Right ventricle myocardium superior (tissue), 1 donor: ENCODE measurements at regions of chrX and their contacts with region 1.

Region 1: GRCh38 chrX:9341291-9342201 is 123.3 kb upstream of the TBL1X start:
- DNase-seq: peak; percentile 81
- ATAC-seq: peak; percentile 38

Region 2: DNA sequence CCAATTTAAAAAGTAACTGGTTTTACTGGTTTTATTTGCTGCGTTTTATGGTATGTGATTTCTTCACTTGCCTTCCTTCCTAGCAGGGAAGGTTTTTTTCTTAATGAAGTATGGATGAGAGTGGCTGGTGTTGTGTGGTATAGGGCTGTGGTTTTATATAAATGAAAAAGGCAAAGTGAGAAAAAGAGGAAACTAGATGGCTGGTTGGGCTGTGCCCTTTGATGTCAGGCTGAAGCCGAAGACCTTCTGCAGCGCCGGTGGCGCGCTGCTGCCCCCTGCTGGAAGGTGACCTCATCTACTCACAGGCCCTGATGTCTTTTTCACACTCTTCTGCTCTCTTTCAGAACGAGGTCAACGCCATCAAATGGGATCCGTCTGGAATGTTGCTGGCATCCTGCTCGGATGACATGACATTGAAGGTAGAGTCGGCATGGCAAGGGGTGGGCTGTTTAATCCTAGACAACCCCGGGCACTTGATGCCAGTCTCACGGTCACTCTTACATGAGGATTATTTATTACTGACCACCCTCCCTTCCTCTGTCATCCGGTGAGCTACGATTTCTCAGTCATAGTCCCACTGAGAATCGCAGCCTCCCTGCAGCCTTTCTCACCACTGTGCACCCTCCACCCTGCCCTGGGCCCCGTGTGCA is 367.5 kb after region 1 on chrX:
- intact Hi-C with region 1: loop called (anchors 10 kb)
- DNase-seq: peak; percentile 82
- ATAC-seq: peak; percentile 90